Left cardiac atrium (tissue), 4 donors: ENCODE measurements at regions of chr15 and their contacts with region 1.

Region 1: DNA sequence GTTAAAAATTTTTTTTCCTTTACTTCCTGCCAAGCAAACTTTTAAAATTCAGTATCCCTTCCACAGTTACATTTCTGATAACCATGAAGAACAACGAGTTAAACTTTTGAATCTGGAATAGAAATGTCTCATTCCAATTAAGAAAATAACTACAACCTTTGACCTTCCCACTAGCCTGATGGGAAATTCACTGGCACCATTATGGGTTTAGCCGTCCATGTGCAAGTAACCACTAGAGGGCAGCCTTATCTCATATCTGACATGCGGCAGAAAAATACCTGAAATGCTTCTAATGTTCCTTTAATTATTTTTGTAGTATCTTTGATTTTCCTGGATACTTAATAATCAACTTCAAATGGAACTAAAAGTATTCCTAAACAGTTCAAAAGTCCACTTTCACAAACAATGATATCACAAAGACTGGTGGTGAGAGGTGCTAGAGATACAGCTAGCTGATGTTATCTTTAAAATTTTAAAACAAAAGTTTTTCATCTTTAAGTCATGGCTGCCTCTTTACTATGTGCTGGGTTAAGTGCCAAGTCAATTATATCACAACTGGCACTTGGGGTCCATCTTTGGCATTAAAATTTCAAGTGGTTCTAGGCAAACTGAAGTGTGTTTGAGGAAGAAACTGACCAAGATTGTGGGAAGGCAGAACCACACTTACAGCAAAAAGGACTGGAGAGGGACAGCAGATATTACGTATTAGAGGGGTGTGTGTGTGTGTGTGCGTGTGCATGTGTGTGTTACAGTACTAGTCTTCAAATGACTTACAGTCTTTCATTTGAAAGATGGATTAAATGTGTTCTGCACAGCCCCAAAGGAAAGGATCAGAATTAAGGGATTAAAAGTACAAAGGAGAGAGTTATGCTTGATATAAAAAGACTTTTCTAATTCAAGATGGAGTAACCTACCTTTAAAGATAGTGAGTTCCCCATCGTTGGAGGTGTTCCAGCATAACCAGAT is 107.1 kb upstream of the ICE2 start:
- DNase-seq: peak; percentile 41
- ATAC-seq: peak; percentile 77 to 86

Region 2: DNA sequence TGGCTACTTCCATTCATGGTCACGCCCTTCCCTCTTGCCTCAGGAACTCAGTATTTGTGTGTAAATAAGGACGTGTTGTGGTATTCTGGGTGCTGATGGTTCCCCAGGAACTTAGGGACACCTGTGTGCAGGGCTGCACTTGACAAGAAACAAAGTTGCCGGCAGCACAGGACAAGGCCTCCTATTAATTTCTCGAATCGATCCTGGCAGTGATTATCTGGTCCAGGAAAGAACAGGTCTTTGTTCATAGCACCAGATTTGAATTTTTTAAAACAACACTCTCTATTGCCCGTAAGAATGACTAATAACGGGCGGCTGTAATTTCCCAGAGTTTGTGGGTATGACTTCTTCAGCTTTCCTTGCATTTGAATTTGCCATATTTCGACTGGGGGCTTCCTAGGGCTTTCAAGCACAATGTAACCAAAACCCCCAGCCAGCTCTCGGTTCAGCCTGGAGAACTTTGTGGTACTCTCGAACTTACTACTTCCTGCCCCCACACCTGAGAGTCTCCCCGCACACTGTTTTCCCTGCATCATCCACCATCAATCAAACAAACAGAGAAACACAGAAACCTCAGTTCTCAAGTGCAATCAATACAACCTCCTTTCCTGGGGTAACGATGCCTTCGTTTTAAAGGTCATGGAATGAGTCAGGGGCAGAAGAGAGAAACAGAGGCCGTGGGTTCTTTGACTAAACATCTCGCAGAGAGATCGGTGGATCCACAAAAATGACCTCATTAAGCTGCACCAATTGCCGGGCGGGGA is 134.6 kb after region 1 on chr15:
- intact Hi-C with region 1: no loop called
- DNase-seq: no peak
- ATAC-seq: no peak

Region 3: DNA sequence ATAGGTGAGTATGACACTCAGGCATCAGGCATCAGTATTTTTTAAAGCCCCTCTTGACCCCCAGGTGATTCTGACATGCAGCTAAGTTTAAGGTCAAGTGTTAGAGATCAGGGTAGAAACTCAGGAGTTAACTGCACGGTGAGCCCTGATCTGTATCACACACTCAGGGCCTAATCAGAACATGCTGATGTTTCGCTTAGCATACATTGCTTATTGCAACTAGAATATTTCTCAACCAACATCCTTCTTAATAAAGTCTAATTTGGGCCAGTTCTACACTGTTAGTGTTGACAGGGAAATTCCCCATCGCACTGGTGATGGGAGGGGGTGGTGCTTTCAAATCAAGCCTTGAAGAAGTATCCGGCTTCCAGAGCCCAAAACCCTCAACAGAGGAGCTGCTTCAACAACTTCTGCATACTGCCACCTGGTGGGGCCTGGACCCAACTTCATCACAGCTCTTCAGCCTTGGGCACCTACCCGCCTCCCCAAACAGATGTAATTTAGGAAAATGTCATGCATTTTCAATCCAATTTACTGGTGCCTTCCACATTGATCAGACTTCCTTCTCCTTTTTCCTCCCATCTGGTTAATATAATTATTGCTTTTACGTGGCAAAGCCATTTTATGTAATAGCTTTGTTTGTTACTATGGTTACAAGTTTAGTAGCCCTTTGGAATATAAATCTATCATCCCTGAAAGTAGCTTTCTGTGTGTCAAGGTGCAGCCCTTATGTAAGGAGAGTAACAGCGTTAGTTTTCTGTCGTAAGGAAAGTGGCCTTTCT is 330.8 kb after region 1 on chr15:
- intact Hi-C with region 1: loop called (anchors 2 to 5 kb)
- DNase-seq: peak; percentile 91
- ATAC-seq: peak; percentile 89 to 93

Region 4: GRCh38 chr15:61051569-61052031 is 465.6 kb after region 1 on chr15:
- intact Hi-C with region 1: loop called (anchors 2 to 10 kb)
- DNase-seq: peak; percentile 41
- ATAC-seq: peak; percentile 88 to 95

Region 5: DNA sequence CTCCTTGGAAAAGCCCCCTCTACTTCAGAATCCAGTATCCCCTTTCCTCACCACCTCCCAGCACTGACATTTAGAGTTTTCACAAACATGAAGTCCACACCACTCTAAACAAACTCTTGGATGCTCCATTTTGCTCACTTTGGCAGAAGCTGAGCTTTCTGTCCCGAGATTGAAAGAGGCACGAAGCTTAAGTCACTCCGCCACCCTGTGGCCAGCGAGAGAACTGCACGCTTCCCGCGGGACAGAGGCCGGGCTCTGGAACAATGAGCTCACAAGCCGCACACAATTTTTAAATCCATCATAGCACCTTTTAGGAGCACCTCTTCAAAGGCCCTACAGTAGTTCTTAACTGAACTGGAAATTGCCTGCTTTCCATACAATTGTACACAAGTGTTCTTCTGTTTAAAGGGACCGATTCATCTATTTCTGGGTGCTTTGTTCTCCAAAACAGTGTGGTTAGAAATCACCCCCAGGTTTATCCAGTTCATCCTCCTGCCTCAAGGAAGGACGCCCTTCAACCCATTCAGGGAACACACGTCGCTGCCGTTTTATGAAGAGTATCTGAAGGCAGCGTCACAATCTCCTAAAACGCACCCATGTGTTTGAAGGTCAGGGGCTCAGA is 1248.2 kb after region 1 on chr15:
- intact Hi-C with region 1: loop called in 1 of 2 experiments (anchors 5 kb)
- DNase-seq: peak; percentile 79
- ATAC-seq: peak; percentile 79 to 85